MCF 10A (cell line): ENCODE measurements at regions of chr17 and their contacts with region 1.

Region 1: GRCh38 chr17:75046582-75047289 is at the starts of genes ATP5PD and KCTD2:
- DNase-seq: peak; percentile 96
- H3K4me3 Mint-ChIP-seq: peak within 1 kb of the TSS; percentile 98
- H3K27ac Mint-ChIP-seq: peak within 1 kb of the TSS; percentile 95
- H3K4me1 Mint-ChIP-seq: peaks cover 13% of the 10 kb centered on the region
- H3K27me3 Mint-ChIP-seq: no peaks in the 10 kb centered on the region
- CTCF ChIP-seq: no peak
- total RNA-seq, gene ATP5PD: 362 and 455 TPM in 2 replicates
- total RNA-seq, gene KCTD2: 11.9 and 12.8 TPM in 2 replicates

Region 2: DNA sequence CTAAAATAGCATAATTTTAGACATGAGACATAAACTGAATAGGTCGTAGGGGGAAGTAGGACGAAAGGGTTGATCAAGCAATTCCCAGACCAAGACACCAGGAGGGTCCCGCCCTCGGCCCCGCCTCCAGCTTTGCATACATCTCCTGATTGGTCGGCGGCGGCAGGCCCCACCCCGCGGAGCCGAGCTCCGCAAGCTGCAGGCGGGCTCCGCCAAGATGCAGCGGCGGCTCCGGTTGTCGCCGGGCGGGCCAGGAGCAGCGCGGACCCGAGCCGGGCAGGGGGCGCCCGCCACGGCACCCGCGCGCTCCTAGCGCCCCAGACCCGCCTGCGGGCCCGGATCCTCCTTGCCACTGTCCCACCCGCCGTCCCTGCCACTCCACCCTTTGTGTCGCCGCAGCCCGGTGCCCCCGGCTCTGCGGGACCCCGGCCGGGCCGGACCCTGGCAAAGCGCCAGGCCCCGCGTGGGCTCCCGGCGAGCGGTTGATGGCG is 59.3 kb before region 1 on chr17 and contains the start of gene CDR2L:
- CTCF ChIA-PET with region 1: interaction called, 6 read pairs
- POLR2A ChIA-PET with region 1: interaction called, 26 read pairs
- intact Hi-C with region 1: no loop called
- DNase-seq: peak; percentile 90
- H3K4me3 Mint-ChIP-seq: peak within 1 kb of the TSS; percentile 78
- H3K27ac Mint-ChIP-seq: peak within 1 kb of the TSS; percentile 16
- H3K4me1 Mint-ChIP-seq: peaks cover 14% of the 10 kb centered on the region
- H3K27me3 Mint-ChIP-seq: no peaks in the 10 kb centered on the region
- CTCF ChIP-seq: no peak
- total RNA-seq, gene CDR2L: 3.4 and 4.1 TPM in 2 replicates

Region 3: DNA sequence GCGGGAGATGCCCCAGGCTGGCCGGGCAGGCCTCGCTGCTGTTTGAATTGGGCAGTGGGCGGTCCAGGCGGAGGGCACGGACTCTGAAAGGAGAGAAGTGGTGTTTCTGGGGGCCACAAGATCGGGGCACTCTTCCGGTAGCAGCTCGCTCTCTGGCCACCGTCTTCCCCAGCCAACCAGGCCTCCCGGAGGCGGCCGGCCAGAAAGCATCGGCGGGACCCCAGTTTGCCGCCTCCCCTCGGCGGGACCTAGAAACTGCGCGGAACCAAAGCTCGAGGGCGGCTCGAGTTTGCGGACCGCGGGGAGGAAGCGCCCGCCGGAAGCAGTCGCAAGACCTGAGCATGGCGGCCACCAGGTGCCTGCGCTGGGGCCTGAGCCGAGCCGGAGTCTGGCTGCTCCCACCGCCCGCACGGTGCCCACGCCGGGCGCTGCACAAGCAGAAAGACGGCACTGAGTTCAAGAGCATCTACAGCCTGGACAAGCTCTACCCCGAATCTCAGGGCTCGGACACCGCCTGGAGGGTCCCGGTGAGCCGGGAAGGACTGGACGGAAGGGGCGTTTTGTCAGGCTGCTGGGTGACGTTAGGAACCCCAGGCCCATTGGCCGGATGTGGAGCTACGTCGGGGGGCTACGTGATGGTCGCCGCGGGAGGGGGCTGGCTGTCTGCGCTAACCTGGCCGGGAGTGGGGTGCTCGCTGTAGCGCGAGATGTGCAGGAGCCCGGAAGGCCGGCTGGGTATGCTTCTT is 34.2 kb before region 1 on chr17 and contains the start of gene MRPL58:
- CTCF ChIA-PET with region 1: interaction called, 4 read pairs
- POLR2A ChIA-PET with region 1: interaction called, 34 read pairs
- intact Hi-C with region 1: no loop called
- DNase-seq: peak; percentile 80
- H3K4me3 Mint-ChIP-seq: peak within 1 kb of the TSS; percentile 96
- H3K27ac Mint-ChIP-seq: peak within 1 kb of the TSS; percentile 77
- H3K4me1 Mint-ChIP-seq: peaks cover 22% of the 10 kb centered on the region
- H3K27me3 Mint-ChIP-seq: no peaks in the 10 kb centered on the region
- CTCF ChIP-seq: peak; percentile 49
- total RNA-seq, gene MRPL58: 56.5 and 71.2 TPM in 2 replicates

Region 4: GRCh38 chr17:75059369-75060345 is 12.9 kb after region 1 on chr17:
- CTCF ChIA-PET with region 1: interaction called, 20 read pairs
- POLR2A ChIA-PET with region 1: interaction called, 12 read pairs
- intact Hi-C with region 1: no loop called
- DNase-seq: no peak
- H3K4me3 Mint-ChIP-seq: no peak overlapping the region
- H3K27ac Mint-ChIP-seq: no peak overlapping the region
- H3K4me1 Mint-ChIP-seq: no peaks in the 10 kb centered on the region
- H3K27me3 Mint-ChIP-seq: no peaks in the 10 kb centered on the region
- CTCF ChIP-seq: peak; percentile 30

Region 5: GRCh38 chr17:75096082-75096625 is 49.4 kb after region 1 on chr17:
- CTCF ChIA-PET with region 1: no interaction called
- POLR2A ChIA-PET with region 1: interaction called, 17 read pairs
- intact Hi-C with region 1: no loop called
- DNase-seq: peak; percentile 97
- H3K4me3 Mint-ChIP-seq: peak overlapping the region; percentile 62
- H3K27ac Mint-ChIP-seq: peak overlapping the region; percentile 98
- H3K4me1 Mint-ChIP-seq: peaks cover 35% of the 10 kb centered on the region
- H3K27me3 Mint-ChIP-seq: no peaks in the 10 kb centered on the region
- CTCF ChIP-seq: no peak